ENCODE measurements at regions of chr4 and their contacts with region 1.

Region 1: DNA sequence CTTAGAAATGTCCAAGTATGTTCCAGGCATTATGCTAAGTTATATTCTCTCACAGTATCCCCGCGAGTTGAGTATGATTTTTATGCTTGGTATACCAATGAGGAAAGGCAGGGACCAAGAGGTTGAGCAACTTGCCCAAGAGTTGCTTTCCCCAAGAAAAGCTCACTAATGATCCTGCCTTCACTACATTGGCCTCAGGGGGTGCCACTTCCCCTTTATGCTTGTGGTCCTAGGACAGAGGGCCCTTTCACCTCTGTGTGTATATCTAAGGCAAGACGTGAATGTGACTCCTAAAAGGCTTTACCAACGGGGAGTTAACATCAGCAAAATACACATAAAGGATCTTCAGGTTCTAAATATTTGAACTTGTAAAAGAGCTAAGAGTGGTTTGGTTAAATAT is 164.4 kb upstream of the CPEB2 start:
- DNase-seq: no peak
- ATAC-seq: peak in 2 of 4 donors; percentile 34 to 37
- H3K4me3 ChIP-seq: no peak overlapping the region
- H3K27ac ChIP-seq: no peak overlapping the region
- H3K4me1 ChIP-seq: peaks cover 15% of the 10 kb centered on the region
- H3K27me3 ChIP-seq: no peaks in the 10 kb centered on the region
- CTCF ChIP-seq: no peak

Region 2: GRCh38 chr4:14787894-14788293 is 50.0 kb before region 1 on chr4:
- intact Hi-C with region 1: no loop called
- DNase-seq: no peak
- ATAC-seq: no peak
- H3K4me3 ChIP-seq: no peak overlapping the region
- H3K27ac ChIP-seq: no peak overlapping the region
- H3K4me1 ChIP-seq: no peaks in the 10 kb centered on the region
- H3K27me3 ChIP-seq: no peaks in the 10 kb centered on the region
- CTCF ChIP-seq: peak; percentile 10

Region 3: DNA sequence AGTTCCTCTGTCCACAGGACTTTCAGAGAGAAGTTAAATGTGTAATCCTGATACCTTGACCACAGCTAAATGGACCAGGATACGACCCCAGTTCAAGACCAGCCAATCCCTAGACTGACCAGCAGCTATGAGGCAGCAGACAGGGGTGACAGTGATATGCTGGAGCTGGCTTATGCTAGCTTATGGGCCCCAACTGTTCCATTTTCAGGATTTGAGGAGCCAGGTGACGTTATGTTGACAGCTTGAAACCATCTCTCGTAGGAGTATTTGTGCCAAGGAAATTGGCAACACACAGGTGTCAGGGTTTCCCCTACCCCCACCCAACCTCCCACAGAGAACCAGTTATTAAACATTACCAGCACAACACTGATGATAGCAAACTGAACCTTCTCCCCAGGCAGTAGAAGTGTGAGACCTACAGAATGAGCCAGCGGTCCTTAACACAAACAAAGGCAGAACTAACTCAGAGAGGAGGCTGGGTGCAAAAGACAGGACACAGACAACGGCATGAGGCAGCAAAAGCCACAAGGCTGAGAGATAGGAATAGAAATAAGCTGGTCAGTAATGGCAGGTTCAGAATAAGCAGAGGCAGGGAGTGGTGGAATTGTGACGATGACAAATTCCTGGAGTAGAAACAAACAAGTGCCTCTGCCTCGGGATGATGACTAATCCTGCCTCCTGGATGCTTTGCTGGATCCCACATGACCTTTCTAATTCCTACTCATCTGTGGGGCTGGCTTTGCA is 78.9 kb after region 1 on chr4:
- intact Hi-C with region 1: loop called in 1 of 2 experiments (anchors 5 kb)
- DNase-seq: no peak
- ATAC-seq: peak in 1 of 4 donors; percentile 36
- H3K4me3 ChIP-seq: no peak overlapping the region
- H3K27ac ChIP-seq: no peak overlapping the region
- H3K4me1 ChIP-seq: no peaks in the 10 kb centered on the region
- H3K27me3 ChIP-seq: no peaks in the 10 kb centered on the region
- CTCF ChIP-seq: no peak

Region 4: GRCh38 chr4:15655229-15656037 is 817.6 kb after region 1 on chr4 and contains the start of gene FBXL5:
- intact Hi-C with region 1: loop called in 1 of 2 experiments (anchors 10 kb)
- DNase-seq: peak; percentile 84 to 90
- ATAC-seq: peak; percentile 93 to 94 (median 93)
- H3K4me3 ChIP-seq: peak within 1 kb of the TSS; percentile 83
- H3K27ac ChIP-seq: peak within 1 kb of the TSS; percentile 100
- H3K4me1 ChIP-seq: peaks cover 31% of the 10 kb centered on the region
- H3K27me3 ChIP-seq: no peaks in the 10 kb centered on the region
- CTCF ChIP-seq: no peak
- total RNA-seq, gene FBXL5: 53.9 to 91.2 (median 67.9) TPM

Measured in psoas muscle (tissue), 8 donors.